Esophagus muscularis mucosa (tissue), 4 donors: ENCODE measurements at regions of chr10 and their contacts with region 1.

Region 1: DNA sequence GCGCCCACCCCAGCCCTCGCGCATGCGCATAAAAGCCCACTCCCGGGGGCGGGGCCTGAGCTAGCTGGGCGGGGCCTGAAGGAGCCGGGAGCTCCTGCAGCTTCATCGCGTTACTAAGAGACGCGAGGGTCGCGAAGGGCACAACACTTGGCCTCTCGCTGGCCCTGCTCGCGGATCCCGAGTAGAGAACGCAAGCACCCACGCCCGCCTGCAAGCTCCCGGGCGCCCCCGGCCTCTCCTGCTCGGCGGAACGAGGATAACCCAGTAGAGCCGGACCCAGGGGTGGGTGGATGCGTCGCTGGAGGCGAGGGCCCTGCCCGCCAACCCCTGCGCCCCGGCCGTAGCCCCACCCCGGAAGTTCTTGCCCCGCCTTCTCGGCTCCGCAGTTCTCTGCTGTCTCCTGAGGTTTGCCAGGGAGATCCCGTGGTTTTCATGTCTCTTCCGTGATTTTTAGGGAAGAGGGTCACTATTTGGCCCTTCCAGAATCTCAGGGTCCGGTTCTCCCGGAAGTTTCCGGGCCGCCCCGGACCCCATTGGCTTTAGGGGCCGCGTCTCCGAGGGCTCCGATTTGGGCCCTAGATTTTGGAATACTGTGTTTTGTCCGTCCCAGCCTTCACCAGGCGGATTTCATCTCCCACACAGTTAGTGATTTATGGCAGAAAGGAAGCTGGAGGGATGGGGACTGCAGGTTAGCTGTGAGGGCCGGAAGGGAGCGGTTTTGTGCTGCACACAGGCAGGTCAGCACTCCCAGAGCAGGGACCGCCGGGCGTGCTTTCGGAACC is at the start of gene MEIG1:
- DNase-seq: peak; percentile 98
- H3K4me3 ChIP-seq: peak within 1 kb of the TSS; percentile 72 to 86 (median 80)
- H3K27ac ChIP-seq: peak within 1 kb of the TSS; percentile 89 to 96 (median 94)
- H3K4me1 ChIP-seq: peaks cover 9 to 19% (median 17%) of the 10 kb centered on the region in 4 donors
- H3K27me3 ChIP-seq: no peaks in the 10 kb centered on the region
- CTCF ChIP-seq: no peak
- EP300 ChIP-seq: no peak
- POLR2A ChIP-seq: peak; percentile 5
- total RNA-seq, gene MEIG1: not detected

Region 2: DNA sequence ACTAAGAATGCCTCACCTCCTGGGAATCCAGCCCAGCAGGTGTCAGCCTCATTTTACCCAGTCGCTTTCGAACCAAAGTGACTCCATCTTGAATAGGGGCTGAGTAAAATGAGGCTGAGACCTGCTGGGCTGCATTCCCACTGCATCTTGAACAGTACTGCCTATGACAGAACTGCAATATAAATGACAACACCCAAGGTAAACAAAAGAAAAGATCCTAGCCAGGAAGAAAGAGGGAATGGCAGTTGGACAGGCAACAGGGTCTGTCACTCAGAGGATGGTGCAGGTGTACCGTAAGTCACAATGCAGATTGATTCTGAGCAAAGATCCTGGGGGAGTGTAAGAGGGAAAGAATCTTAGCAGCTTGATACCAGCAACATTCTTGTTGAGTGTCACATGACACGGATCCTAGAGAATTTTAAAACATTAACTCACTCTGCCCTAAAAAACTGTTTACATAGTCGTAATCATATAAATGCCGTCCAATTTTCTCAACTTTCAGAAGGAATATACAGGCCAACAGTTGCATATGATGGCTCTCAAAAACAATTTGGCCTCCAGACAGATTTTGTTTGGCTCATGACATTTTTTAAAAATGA is 180.3 kb before region 1 on chr10:
- intact Hi-C with region 1: no loop called
- DNase-seq: peak; percentile 31
- H3K4me3 ChIP-seq: no peak overlapping the region
- H3K27ac ChIP-seq: peak overlapping the region in 1 of 4 donors; percentile 11
- H3K4me1 ChIP-seq: peaks cover 0 to 10% (median 6%) of the 10 kb centered on the region in 4 donors
- H3K27me3 ChIP-seq: no peaks in the 10 kb centered on the region
- CTCF ChIP-seq: no peak
- EP300 ChIP-seq: no peak
- POLR2A ChIP-seq: no peak

Region 3: GRCh38 chr10:14837757-14838581 is 121.5 kb before region 1 on chr10 and contains the starts of genes CDNF, HSPA14 and MSANTD7:
- intact Hi-C with region 1: loop called (anchors 5 kb)
- DNase-seq: peak; percentile 99
- H3K4me3 ChIP-seq: peak within 1 kb of the TSS; percentile 71 to 97 (median 84)
- H3K27ac ChIP-seq: peak within 1 kb of the TSS; percentile 95 to 96 (median 96)
- H3K4me1 ChIP-seq: peaks cover 17 to 22% (median 19%) of the 10 kb centered on the region in 4 donors
- H3K27me3 ChIP-seq: no peaks in the 10 kb centered on the region
- CTCF ChIP-seq: peak in 1 of 3 experiments; percentile 9
- EP300 ChIP-seq: no peak
- POLR2A ChIP-seq: peak; percentile 66
- total RNA-seq, gene CDNF: 0.45 to 3.7 (median 0.67) TPM
- total RNA-seq, gene HSPA14: 6.8 to 9.8 (median 7.8) TPM
- total RNA-seq, gene MSANTD7: 5.4 to 11.1 (median 8.0) TPM

Region 4: DNA sequence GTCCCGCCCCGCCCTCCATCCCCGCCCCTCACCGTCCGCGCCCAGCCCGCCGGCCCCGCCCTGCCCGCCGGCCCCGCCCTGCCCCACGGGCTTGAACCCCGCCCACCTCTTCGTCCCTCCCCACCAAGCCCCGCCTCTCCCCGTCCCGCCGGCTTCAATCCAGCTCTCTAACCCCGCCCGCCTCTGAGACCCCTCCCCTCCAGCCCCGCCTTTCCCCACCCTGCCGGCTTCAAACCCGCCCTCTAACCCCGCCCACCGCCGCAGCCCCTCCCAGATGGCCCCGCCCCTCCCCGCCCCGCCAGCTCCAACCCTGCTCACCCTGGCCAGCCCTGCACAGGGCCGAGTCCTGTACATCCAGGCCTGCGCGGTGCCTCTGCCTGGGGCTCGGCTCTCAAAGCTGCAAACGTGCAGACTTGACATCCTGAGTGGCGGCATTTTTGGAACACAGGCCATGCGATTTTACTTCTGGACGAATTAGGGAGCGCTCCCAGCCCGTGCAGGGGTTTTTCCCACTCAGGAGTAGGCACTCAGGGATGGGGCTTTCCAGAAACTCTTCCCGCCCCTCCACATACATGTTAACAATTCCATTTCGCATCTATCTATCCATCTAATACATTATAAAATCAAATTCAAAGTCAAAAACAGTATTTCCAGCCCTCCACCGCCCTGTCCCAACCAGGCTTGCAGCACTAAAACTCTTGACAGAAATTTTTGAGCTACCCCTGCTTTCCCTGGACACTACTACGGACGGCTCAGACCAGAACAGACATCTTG is 209.5 kb after region 1 on chr10:
- intact Hi-C with region 1: loop called (anchors 5 kb)
- DNase-seq: peak; percentile 98
- H3K4me3 ChIP-seq: peak overlapping the region; percentile 45 to 99 (median 94)
- H3K27ac ChIP-seq: peak overlapping the region; percentile 21 to 67 (median 53)
- H3K4me1 ChIP-seq: peaks cover 14 to 35% (median 32%) of the 10 kb centered on the region in 4 donors
- H3K27me3 ChIP-seq: no peaks in the 10 kb centered on the region
- CTCF ChIP-seq: no peak
- EP300 ChIP-seq: no peak
- POLR2A ChIP-seq: no peak